H1 (cell line): ENCODE measurements at regions of chr18 and their contacts with region 1.

Region 1: DNA sequence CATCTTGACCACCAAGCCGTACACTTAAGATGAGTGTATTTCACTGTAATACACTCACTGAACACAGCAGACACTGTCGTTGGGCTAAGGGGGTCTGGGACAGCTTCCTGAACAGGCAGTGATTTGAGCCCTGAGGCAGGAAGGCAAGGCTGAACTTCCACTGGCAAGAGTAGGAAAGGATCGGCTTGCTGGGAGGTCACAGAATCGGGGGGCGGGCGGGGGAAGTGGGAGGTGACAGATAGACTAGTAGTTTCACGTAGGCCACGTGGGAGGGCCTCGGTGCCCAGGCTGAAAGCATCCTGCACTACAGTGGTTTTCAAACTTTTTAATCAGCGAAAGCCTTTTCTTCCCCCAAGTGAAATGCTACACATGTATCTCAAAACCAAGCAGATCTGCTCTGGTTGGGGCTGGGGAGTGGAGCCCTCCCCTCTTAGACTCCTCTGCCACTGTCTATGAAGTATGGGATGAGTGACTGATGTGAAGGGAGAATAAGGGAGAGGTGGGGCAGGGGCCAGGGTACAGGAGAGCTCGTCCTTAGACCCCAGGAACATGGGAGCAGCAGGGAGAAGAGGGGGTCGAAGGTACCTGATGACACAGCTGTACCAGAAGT is 8.6 kb downstream of the PARD6G start:
- DNase-seq: no peak
- H3K4me3 ChIP-seq: no peak overlapping the region
- H3K27ac ChIP-seq: no peak overlapping the region
- H3K4me1 ChIP-seq: peaks cover 0 to 4% (median 0%) of the 10 kb centered on the region in 4 experiments; a peak in 3 of 7 replicates
- H3K27me3 ChIP-seq: no peaks in the 10 kb centered on the region
- CTCF ChIP-seq: no peak
- EP300 ChIP-seq: no peak
- POLR2A ChIP-seq: no peak
- RAD21 ChIP-seq: no peak

Region 2: GRCh38 chr18:80006724-80007123 is 232.0 kb before region 1 on chr18:
- CTCF ChIA-PET with region 1: no interaction called
- POLR2A ChIA-PET with region 1: no interaction called
- DNase-seq: no peak
- H3K4me3 ChIP-seq: no peak overlapping the region
- H3K27ac ChIP-seq: no peak overlapping the region
- H3K4me1 ChIP-seq: no peaks in the 10 kb centered on the region; a peak in 1 of 7 replicates
- H3K27me3 ChIP-seq: no peaks in the 10 kb centered on the region
- CTCF ChIP-seq: no peak
- EP300 ChIP-seq: no peak
- POLR2A ChIP-seq: no peak
- RAD21 ChIP-seq: no peak

Region 3: DNA sequence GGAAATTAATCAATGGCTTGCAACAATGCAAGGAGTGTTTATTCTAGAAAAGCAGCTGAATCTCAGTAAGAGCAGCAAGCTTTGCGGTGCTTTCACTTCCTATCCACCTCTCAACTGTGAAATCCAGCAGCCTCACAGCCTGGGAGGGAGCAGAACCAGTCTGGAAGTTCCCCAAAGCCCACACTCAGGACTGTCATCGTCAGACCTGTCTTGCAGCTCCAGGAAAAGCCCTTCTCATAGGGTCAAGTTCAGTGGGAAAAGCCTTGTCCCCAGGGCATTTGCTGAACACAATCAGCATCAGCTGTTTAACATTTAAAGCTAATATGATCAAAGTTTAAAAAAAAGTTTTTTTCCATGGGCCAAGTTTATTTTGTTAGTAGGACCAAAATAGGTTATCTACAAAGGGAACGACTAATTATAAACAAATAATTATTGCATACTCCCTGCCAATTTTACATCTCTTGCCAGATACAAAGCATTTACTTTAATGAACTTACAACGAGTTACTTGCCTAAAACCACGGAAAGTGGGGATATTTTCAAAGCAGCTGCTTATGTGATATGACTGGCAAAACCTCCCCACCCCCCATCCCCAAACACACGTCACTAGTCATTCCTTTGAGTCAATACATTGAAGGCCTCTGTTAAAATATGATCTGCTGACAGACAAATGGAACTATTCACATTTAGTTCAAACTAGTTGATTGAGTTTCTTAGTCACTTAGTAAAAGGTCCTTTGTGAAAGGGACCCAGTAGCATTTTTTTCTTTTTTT is 28.3 kb before region 1 on chr18:
- CTCF ChIA-PET with region 1: interaction called, 70 read pairs
- POLR2A ChIA-PET with region 1: interaction called, 3 read pairs
- DNase-seq: peak in 1 of 2 experiments; percentile 34
- H3K4me3 ChIP-seq: no peak overlapping the region
- H3K27ac ChIP-seq: no peak overlapping the region
- H3K4me1 ChIP-seq: no peaks in the 10 kb centered on the region
- H3K27me3 ChIP-seq: no peaks in the 10 kb centered on the region
- CTCF ChIP-seq: no peak
- EP300 ChIP-seq: no peak
- POLR2A ChIP-seq: no peak
- RAD21 ChIP-seq: no peak